Dendritic cell treated with granulocyte-macrophage colony-stimulating factor and Interleukin-4, amounts not matched to agents 40 ng/mL and 50 ng/mL, for 4 days (primary cell): ENCODE measurements at regions of chr10 and their contacts with region 1.

Region 1: GRCh38 chr10:93352638-93353383 is 129.3 kb downstream of the MYOF start:
- H3K4me3 Mint-ChIP-seq: no peak overlapping the region
- H3K27ac Mint-ChIP-seq: no peak overlapping the region
- H3K4me1 Mint-ChIP-seq: peaks cover 2% of the 10 kb centered on the region
- H3K27me3 Mint-ChIP-seq: no peaks in the 10 kb centered on the region

Region 2: DNA sequence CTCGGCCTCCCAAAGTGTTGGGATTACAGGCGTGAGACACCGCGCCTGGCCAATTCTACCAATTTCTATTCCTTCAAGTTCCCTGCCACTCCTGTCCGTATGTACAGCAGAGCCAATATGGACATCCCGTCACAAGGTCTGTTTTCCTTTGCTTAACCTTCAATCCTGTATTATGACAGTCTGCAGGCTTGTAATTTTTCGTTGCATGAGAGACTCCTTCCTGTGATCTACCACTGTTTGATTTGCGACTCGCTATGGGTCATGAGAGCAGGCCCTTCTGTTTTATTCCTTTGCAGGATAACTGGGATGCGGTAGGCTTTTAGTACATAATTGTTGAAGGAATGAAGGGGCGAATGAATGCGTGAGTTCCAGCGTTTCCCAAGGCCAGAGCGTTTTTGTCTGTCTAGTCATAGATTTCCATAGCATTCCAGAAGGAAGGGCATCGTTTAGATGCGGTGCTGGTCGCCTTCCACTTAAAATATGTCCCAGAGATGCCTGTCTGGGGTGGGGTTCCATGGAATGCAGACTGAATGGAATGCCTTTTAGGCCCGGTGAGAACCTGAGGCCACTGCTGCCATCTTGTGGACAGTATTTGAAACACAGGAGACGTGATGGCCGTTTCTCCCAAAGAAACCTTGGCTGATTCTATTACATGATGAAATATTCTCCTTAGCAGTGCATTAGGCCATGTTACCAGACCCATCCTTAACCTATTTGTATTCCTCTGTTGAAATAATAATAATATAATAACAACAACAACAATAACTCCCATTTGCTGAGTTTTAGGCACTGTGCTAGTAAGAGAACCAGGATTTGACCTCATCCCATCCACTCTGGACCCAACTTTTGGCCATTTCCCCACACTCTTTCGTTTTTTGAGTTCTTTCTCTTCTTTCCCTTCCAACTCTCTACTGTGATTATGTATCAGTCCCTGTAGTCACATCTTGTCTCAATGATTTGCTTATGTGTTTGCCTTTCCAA is 63.9 kb before region 1 on chr10:
- intact Hi-C with region 1: loop called (anchors 5 kb)
- H3K4me3 Mint-ChIP-seq: no peak overlapping the region
- H3K27ac Mint-ChIP-seq: no peak overlapping the region
- H3K4me1 Mint-ChIP-seq: peaks cover 8% of the 10 kb centered on the region
- H3K27me3 Mint-ChIP-seq: peaks cover 8% of the 10 kb centered on the region

Region 3: DNA sequence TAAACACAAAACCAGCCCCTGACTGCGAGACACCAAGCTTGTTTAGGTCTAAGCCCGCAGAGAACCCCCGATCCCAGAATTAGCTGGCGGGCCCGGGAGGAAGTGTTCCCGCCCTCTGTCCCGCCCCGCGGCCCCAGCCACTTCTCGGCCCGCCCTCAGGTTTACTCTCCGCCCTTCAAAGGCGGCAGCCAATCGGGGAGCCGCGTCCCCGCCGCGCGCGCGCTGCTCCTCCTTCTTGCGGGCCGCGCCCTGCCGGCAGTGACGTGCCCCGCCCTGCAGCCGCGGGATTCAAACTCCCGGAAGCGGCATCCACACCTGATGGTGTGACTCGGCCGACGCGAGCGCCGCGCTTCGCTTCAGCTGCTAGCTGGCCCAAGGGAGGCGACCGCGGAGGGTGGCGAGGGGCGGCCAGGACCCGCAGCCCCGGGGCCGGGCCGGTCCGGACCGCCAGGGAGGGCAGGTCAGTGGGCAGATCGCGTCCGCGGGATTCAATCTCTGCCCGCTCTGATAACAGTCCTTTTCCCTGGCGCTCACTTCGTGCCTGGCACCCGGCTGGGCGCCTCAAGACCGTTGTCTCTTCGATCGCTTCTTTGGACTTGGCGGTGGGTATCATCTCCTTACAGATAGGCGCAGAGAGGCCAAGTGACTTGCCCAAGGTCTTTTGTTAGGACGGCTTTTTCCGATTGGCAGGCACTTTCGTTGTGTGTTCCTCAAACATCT is 143.7 kb after region 1 on chr10 and contains the start of gene CEP55:
- intact Hi-C with region 1: no loop called
- H3K4me3 Mint-ChIP-seq: peak within 1 kb of the TSS; percentile 88
- H3K27ac Mint-ChIP-seq: peak within 1 kb of the TSS; percentile 79
- H3K4me1 Mint-ChIP-seq: peaks cover 22% of the 10 kb centered on the region
- H3K27me3 Mint-ChIP-seq: peaks cover 5% of the 10 kb centered on the region

Region 4: DNA sequence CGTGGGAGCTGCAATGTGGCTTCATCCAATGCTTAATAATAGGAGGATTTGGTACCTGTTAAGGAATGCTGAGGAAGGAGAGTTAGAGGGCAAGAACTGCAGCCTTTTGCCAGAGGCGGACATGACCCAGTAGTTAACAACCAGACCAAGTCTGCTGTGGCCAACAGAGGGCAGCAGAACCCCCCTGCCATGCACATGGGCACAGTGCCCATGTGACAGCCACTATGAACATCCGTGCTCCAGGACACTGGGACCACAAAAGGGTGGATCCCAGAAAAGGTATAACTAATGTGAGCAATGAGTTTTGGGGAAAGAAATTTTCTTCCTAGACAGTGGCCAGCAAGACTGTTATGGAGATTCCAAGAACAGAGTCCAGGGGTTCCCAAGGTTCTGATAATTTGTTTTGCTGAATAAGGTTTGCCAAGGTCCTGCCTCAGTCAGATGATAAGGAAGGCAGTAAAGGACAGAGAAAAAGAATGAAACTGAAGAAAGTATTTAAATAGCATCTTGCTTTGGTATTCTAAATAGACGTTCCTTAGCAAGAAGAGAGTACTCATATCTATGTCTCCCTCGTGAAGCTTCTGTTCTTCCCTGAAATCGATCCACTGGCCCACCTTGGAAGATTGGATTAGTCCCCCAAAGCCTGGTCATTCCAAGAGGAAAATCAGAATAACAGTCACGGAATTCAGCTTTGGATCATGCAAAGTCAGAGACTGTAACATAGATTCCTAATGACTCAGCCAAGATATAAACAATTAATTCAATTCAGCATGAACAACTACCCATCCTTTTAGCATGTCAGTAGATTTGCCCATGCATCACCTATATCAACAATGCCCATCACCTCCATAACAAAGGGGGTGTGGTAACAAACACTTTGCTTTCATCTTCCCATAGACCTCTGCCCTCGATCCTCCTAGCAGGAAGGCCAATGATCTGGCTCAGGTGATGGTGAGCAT is 461.0 kb after region 1 on chr10:
- intact Hi-C with region 1: no loop called
- H3K4me3 Mint-ChIP-seq: no peak overlapping the region
- H3K27ac Mint-ChIP-seq: no peak overlapping the region
- H3K4me1 Mint-ChIP-seq: peaks cover 18% of the 10 kb centered on the region
- H3K27me3 Mint-ChIP-seq: peaks cover 28% of the 10 kb centered on the region